ENCODE measurements at regions of chr16 and their contacts with region 1.

Region 1: GRCh38 chr16:28935924-28936783 is 4.4 kb downstream of the CD19 start:
- DNase-seq: peak; percentile 93
- ATAC-seq: peak; percentile 100
- H3K4me3 Mint-ChIP-seq: peak overlapping the region; percentile 72
- H3K27ac Mint-ChIP-seq: peak overlapping the region; percentile 51
- H3K4me1 Mint-ChIP-seq: peaks cover 16% of the 10 kb centered on the region
- H3K27me3 Mint-ChIP-seq: no peaks in the 10 kb centered on the region
- CTCF ChIP-seq: no peak

Region 2: GRCh38 chr16:28873536-28874201 is 62.5 kb before region 1 on chr16:
- CTCF ChIA-PET with region 1: no interaction called
- POLR2A ChIA-PET with region 1: no interaction called
- intact Hi-C with region 1: loop called (anchors 5 kb)
- DNase-seq: peak; percentile 66
- ATAC-seq: peak; percentile 94
- H3K4me3 Mint-ChIP-seq: no peak overlapping the region
- H3K27ac Mint-ChIP-seq: no peak overlapping the region
- H3K4me1 Mint-ChIP-seq: peaks cover 5% of the 10 kb centered on the region
- H3K27me3 Mint-ChIP-seq: no peaks in the 10 kb centered on the region
- CTCF ChIP-seq: peak; percentile 85

Region 3: DNA sequence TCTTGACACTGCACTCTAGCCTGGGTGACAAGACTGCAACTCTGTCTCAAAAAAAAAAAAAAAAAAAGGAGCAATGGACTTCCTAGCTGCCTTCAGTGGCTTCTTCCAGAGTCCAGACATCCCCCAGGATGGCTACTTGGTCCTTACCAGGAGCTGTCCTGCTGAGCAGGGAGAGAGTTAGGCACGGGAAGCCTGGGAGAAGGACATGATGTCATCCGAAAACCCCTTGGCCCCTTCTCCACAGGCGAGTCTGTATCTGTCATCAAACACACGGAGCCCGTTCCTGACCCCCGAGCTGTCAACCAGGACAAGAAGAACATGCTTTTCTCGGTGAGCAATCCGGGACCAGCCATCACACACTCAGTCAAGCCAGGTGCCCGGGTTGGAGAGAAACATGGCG is 49.2 kb before region 1 on chr16:
- CTCF ChIA-PET with region 1: no interaction called
- POLR2A ChIA-PET with region 1: no interaction called
- intact Hi-C with region 1: no loop called
- DNase-seq: no peak
- ATAC-seq: no peak
- H3K4me3 Mint-ChIP-seq: no peak overlapping the region
- H3K27ac Mint-ChIP-seq: no peak overlapping the region
- H3K4me1 Mint-ChIP-seq: no peaks in the 10 kb centered on the region
- H3K27me3 Mint-ChIP-seq: peaks cover 1% of the 10 kb centered on the region
- CTCF ChIP-seq: no peak

Region 4: DNA sequence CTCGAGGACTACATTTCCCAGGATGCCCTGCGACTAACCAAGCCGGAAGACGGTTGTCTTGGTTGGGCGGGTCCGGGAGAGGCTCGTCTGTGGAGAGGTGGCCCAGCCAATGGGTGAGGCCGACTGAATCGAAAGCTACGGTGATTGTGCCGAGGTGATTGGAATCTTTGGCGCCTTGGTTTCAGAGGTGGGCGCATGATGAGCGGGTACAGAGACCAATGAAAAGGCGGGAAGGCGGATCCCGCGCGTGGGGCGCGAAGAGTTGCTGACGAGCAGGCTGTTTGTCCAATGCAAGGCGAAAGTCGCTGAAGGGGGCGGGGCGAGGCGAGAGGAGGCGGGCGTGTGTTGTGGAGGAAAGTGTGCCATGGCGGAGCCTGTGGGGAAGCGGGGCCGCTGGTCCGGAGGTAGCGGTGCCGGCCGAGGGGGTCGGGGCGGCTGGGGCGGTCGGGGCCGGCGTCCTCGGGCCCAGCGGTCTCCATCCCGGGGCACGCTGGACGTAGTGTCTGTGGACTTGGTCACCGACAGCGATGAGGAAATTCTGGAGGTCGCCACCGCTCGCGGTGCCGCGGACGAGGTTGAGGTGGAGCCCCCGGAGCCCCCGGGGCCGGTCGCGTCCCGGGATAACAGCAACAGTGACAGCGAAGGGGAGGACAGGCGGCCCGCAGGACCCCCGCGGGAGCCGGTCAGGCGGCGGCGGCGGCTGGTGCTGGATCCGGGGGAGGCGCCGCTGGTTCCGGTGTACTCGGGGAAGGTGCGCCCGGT is 14.7 kb after region 1 on chr16 and contains the start of gene NFATC2IP:
- CTCF ChIA-PET with region 1: interaction called, 87 read pairs
- POLR2A ChIA-PET with region 1: no interaction called
- intact Hi-C with region 1: no loop called
- DNase-seq: peak; percentile 100
- ATAC-seq: peak; percentile 96
- H3K4me3 Mint-ChIP-seq: peak within 1 kb of the TSS; percentile 96
- H3K27ac Mint-ChIP-seq: peak within 1 kb of the TSS; percentile 90
- H3K4me1 Mint-ChIP-seq: peaks cover 25% of the 10 kb centered on the region
- H3K27me3 Mint-ChIP-seq: no peaks in the 10 kb centered on the region
- CTCF ChIP-seq: no peak
- total RNA-seq, gene NFATC2IP: 63.8 to 71.8 TPM

Region 5: GRCh38 chr16:28984619-28985135 is 48.5 kb after region 1 on chr16 and contains the start of gene LAT:
- CTCF ChIA-PET with region 1: no interaction called
- POLR2A ChIA-PET with region 1: no interaction called
- intact Hi-C with region 1: no loop called
- DNase-seq: peak; percentile 84
- ATAC-seq: peak; percentile 64
- H3K4me3 Mint-ChIP-seq: peak within 1 kb of the TSS; percentile 94
- H3K27ac Mint-ChIP-seq: peak within 1 kb of the TSS; percentile 96
- H3K4me1 Mint-ChIP-seq: peaks cover 42% of the 10 kb centered on the region
- H3K27me3 Mint-ChIP-seq: no peaks in the 10 kb centered on the region
- CTCF ChIP-seq: no peak
- total RNA-seq, gene LAT: 193 to 206 TPM

Measured in activated CD8-positive, alpha-beta T cell treated with anti-CD3 and anti-CD28 coated beads for 36 hours (primary cell).